Mammary epithelial cell (primary cell): ENCODE measurements at regions of chr2 and their contacts with region 1.

Region 1: GRCh38 chr2:67215214-67216055 is 181.7 kb upstream of the ETAA1 start:
- DNase-seq: peak; percentile 46
- H3K4me3 ChIP-seq: no peak overlapping the region
- H3K27ac ChIP-seq: no peak overlapping the region
- H3K4me1 ChIP-seq: no peaks in the 10 kb centered on the region
- H3K27me3 ChIP-seq: no peaks in the 10 kb centered on the region
- CTCF ChIP-seq: peak; percentile 49 to 71

Region 2: DNA sequence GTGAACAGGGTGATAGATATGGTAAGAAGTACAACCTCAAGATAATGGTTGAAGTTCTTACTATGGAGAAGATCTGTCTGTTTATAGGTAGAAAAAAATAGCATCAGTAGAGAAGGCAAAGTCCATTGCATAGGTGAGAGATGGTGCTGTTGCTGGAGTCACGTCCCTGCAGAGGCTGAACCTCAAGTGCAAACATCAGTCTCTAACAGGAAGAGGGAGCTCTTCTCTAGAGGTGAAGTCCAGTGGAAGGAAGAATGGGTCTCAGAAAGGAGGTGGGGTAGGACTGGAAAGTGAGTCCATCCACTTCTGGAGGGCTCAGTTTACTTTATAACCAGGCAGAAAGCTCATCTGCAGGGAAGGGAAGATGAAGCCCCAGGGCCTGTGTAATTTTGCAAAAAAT is 442.8 kb before region 1 on chr2:
- CTCF ChIA-PET with region 1: no interaction called
- dilution Hi-C with region 1: no loop called
- in situ Hi-C with region 1: no loop called
- intact Hi-C with region 1: loop called (anchors 10 kb)
- DNase-seq: no peak
- H3K4me3 ChIP-seq: no peak overlapping the region
- H3K27ac ChIP-seq: no peak overlapping the region
- H3K4me1 ChIP-seq: no peaks in the 10 kb centered on the region
- H3K27me3 ChIP-seq: no peaks in the 10 kb centered on the region
- CTCF ChIP-seq: no peak

Region 3: DNA sequence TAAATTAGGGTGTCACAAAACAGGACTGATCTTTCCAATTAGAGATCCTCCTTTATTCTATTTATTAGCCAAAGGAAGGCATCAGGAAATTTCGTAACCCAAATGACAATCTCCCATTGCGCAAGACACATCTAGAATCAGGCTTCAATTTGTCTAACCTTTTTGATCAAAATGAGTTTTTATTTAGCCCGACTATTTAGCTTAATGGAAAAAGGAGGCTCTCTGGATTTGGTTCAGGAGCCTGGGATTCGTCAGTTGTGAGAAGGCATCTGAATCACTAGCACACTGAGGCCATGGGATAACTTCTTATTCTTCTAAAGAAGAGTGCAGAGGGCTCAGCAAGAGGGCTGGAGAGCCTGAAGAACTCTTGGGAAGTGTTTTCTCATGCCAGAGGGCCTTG is 150.4 kb before region 1 on chr2:
- CTCF ChIA-PET with region 1: no interaction called
- dilution Hi-C with region 1: no loop called
- in situ Hi-C with region 1: no loop called
- intact Hi-C with region 1: no loop called
- DNase-seq: no peak
- H3K4me3 ChIP-seq: no peak overlapping the region
- H3K27ac ChIP-seq: no peak overlapping the region
- H3K4me1 ChIP-seq: no peaks in the 10 kb centered on the region
- H3K27me3 ChIP-seq: no peaks in the 10 kb centered on the region
- CTCF ChIP-seq: no peak